ENCODE measurements at regions of chr14 and their contacts with region 1.

Region 1: GRCh38 chr14:66495218-66496098 is 9.3 kb downstream of the CCDC196 start:
- DNase-seq: peak in 6 of 9 experiments; percentile 11 to 70 (median 34)
- ATAC-seq: peak; percentile 31
- H3K4me3 ChIP-seq: no peak overlapping the region
- H3K4me3 Mint-ChIP-seq: no peak overlapping the region
- H3K27ac ChIP-seq: no peak overlapping the region
- H3K27ac Mint-ChIP-seq: no peak overlapping the region
- H3K4me1 ChIP-seq: peaks cover 17% of the 10 kb centered on the region
- H3K4me1 Mint-ChIP-seq: peaks cover 20% of the 10 kb centered on the region
- H3K27me3 ChIP-seq: no peaks in the 10 kb centered on the region
- H3K27me3 Mint-ChIP-seq: no peaks in the 10 kb centered on the region
- CTCF ChIP-seq: peak; percentile 75

Region 2: DNA sequence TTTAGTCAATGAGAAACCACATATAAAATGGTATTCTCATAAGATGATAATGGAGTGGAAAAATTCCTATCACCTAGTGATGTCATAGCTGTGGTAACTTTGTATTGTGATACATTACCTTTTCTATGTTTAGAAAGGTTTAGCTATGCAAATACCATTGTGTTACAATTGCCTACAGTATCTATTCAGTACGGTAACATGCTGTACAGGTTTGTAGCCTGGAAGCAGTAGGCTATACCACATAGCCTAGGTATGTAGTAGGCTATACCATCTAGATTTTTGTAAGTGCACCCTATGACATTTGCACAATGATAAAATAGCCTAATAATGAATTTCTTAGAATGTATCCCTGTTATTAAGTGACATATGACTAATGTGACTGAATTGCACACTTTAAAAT is 59.8 kb before region 1 on chr14:
- CTCF ChIA-PET with region 1: no interaction called
- POLR2A ChIA-PET with region 1: no interaction called
- intact Hi-C with region 1: no loop called
- DNase-seq: no peak
- ATAC-seq: no peak
- H3K4me3 ChIP-seq: no peak overlapping the region
- H3K4me3 Mint-ChIP-seq: no peak overlapping the region
- H3K27ac ChIP-seq: no peak overlapping the region
- H3K27ac Mint-ChIP-seq: no peak overlapping the region
- H3K4me1 ChIP-seq: no peaks in the 10 kb centered on the region
- H3K4me1 Mint-ChIP-seq: no peaks in the 10 kb centered on the region
- H3K27me3 ChIP-seq: no peaks in the 10 kb centered on the region
- H3K27me3 Mint-ChIP-seq: no peaks in the 10 kb centered on the region
- CTCF ChIP-seq: no peak

Region 3: DNA sequence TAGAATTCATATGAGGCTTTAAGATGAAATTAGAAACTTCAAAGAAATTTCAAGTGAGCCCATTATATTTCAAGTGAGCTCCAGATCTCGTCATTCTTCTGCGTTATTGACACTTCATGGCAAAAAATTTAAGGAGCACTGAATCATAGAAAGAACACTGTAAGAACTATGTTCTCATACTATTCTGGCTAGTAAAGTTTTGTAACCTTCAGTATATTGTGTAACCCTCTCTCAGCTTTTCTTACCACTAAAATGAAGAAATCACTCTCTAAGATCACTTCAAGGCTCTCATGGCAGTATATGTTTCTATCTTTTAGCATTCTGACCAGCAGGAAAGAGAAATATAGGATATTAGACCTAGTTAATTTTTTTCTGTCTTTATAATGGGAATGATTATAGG is 18.8 kb after region 1 on chr14:
- CTCF ChIA-PET with region 1: no interaction called
- POLR2A ChIA-PET with region 1: no interaction called
- intact Hi-C with region 1: no loop called
- DNase-seq: no peak
- ATAC-seq: no peak
- H3K4me3 ChIP-seq: no peak overlapping the region
- H3K4me3 Mint-ChIP-seq: no peak overlapping the region
- H3K27ac ChIP-seq: no peak overlapping the region
- H3K27ac Mint-ChIP-seq: no peak overlapping the region
- H3K4me1 ChIP-seq: no peaks in the 10 kb centered on the region
- H3K4me1 Mint-ChIP-seq: peaks cover 19% of the 10 kb centered on the region
- H3K27me3 ChIP-seq: no peaks in the 10 kb centered on the region
- H3K27me3 Mint-ChIP-seq: no peaks in the 10 kb centered on the region
- CTCF ChIP-seq: no peak

Region 4: GRCh38 chr14:66746316-66747006 is 251.0 kb after region 1 on chr14:
- CTCF ChIA-PET with region 1: interaction called, 5 read pairs
- POLR2A ChIA-PET with region 1: no interaction called
- intact Hi-C with region 1: loop called in 1 of 2 experiments (anchors 2 kb)
- DNase-seq: peak in 2 of 9 experiments; percentile 13 to 38
- ATAC-seq: no peak
- H3K4me3 ChIP-seq: no peak overlapping the region
- H3K4me3 Mint-ChIP-seq: no peak overlapping the region
- H3K27ac ChIP-seq: no peak overlapping the region
- H3K27ac Mint-ChIP-seq: no peak overlapping the region
- H3K4me1 ChIP-seq: no peaks in the 10 kb centered on the region
- H3K4me1 Mint-ChIP-seq: no peaks in the 10 kb centered on the region
- H3K27me3 ChIP-seq: no peaks in the 10 kb centered on the region
- H3K27me3 Mint-ChIP-seq: no peaks in the 10 kb centered on the region
- CTCF ChIP-seq: no peak

Region 5: GRCh38 chr14:66758031-66758613 is 262.7 kb after region 1 on chr14:
- CTCF ChIA-PET with region 1: no interaction called
- POLR2A ChIA-PET with region 1: no interaction called
- intact Hi-C with region 1: no loop called
- DNase-seq: no peak
- ATAC-seq: no peak
- H3K4me3 ChIP-seq: no peak overlapping the region
- H3K4me3 Mint-ChIP-seq: no peak overlapping the region
- H3K27ac ChIP-seq: no peak overlapping the region
- H3K27ac Mint-ChIP-seq: no peak overlapping the region
- H3K4me1 ChIP-seq: no peaks in the 10 kb centered on the region
- H3K4me1 Mint-ChIP-seq: no peaks in the 10 kb centered on the region
- H3K27me3 ChIP-seq: no peaks in the 10 kb centered on the region
- H3K27me3 Mint-ChIP-seq: no peaks in the 10 kb centered on the region
- CTCF ChIP-seq: no peak

Region 6: DNA sequence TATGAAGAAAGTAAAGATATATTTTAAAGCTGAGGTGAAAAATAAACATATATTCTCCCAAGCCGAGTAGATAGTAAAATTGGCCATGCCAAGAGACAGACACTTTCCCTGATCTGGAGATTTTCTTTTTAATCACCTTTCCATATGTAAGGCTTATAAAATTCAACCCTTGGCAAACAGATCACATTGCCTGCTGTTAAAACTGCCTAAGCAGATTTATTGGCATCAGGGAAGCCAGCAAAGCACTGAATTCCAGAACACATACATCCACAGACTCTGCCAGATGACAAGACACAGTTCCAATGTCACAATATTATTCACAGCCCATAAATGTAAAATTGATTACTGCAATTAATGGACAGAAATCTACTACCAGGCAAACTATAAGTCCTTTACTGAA is 615.6 kb after region 1 on chr14:
- CTCF ChIA-PET with region 1: no interaction called
- POLR2A ChIA-PET with region 1: no interaction called
- intact Hi-C with region 1: loop called in 1 of 2 experiments (anchors 2 kb)
- DNase-seq: no peak
- ATAC-seq: no peak
- H3K4me3 ChIP-seq: no peak overlapping the region
- H3K4me3 Mint-ChIP-seq: no peak overlapping the region
- H3K27ac ChIP-seq: no peak overlapping the region
- H3K27ac Mint-ChIP-seq: no peak overlapping the region
- H3K4me1 ChIP-seq: no peaks in the 10 kb centered on the region
- H3K4me1 Mint-ChIP-seq: no peaks in the 10 kb centered on the region
- H3K27me3 ChIP-seq: no peaks in the 10 kb centered on the region
- H3K27me3 Mint-ChIP-seq: no peaks in the 10 kb centered on the region
- CTCF ChIP-seq: no peak

Region 7: DNA sequence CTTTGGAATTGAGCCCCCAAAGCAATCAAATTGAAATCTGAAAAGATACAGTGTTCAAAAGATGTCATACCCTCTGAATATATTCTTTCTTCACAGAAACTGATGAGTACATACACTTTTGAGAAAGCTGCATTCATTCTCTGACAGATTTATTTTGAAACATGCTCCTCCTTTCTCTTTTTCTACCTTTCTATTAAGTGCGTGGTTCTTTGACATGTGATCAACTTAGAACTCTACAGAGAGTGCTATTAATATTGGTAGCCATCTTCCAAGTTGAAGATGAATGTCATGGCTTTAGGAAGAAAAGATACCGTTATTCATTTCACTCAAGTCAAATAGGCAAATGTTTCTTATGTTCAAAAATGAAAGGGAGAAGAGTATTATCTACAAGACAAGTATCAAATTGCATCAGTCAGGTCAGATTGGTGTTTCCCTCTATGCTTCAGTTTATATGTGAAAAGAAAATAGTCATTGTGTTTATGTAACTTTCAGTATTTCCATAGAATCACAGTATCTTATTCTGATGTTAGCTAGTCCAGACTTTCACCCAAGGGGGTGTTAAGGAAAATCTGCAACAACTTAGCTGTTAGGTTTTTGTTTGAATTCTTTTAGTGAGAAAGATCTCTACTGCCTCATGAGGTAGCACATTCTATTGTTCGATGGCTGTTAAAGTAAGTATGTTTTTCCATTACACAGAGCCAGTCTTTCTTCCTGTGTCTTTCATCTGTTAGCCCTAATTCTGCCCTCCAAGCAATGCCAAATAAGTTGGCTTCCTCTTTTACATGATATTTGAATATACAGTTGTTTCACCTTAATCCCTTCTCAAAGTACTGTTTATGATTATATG is 638.4 kb after region 1 on chr14:
- CTCF ChIA-PET with region 1: no interaction called
- POLR2A ChIA-PET with region 1: no interaction called
- intact Hi-C with region 1: loop called in 1 of 2 experiments (anchors 5 kb)
- DNase-seq: no peak
- ATAC-seq: no peak
- H3K4me3 ChIP-seq: no peak overlapping the region
- H3K4me3 Mint-ChIP-seq: no peak overlapping the region
- H3K27ac ChIP-seq: no peak overlapping the region
- H3K27ac Mint-ChIP-seq: no peak overlapping the region
- H3K4me1 ChIP-seq: no peaks in the 10 kb centered on the region
- H3K4me1 Mint-ChIP-seq: no peaks in the 10 kb centered on the region
- H3K27me3 ChIP-seq: no peaks in the 10 kb centered on the region
- H3K27me3 Mint-ChIP-seq: no peaks in the 10 kb centered on the region
- CTCF ChIP-seq: no peak